Gastrocnemius medialis (tissue), 4 donors: ENCODE measurements at regions of chr3 and their contacts with region 1.

Region 1: DNA sequence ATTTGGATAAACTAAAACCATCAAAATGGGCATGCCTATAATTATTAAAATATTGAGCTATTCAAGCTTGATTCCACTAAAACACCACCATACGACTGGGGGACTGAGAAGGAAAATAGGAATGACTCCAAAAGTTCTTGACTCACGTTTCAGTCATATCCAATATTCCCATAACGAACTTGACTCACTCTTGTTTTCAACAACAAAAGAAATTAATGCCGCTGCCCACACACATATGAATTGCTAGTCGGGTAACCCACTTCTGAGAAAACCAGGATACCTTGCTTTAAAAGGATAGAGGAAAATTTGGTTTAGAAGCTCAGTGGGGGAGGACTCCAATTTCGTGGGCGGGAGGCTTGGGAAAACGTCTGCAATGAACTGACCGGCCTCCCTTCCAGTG is 5.2 kb downstream of the HTR3C start:
- DNase-seq: no peak
- ATAC-seq: no peak
- H3K4me3 ChIP-seq: no peak overlapping the region
- H3K27ac ChIP-seq: no peak overlapping the region
- H3K4me1 ChIP-seq: no peaks in the 10 kb centered on the region
- H3K27me3 ChIP-seq: no peaks in the 10 kb centered on the region
- CTCF ChIP-seq: no peak
- POLR2A ChIP-seq: no peak

Region 2: GRCh38 chr3:183975981-183976662 is 81.9 kb before region 1 on chr3:
- in situ Hi-C with region 1: no loop called
- intact Hi-C with region 1: no loop called
- DNase-seq: no peak
- ATAC-seq: no peak
- H3K4me3 ChIP-seq: no peak overlapping the region
- H3K27ac ChIP-seq: peak overlapping the region; percentile 88 to 94 (median 90)
- H3K4me1 ChIP-seq: peaks cover 44 to 52% of the 10 kb centered on the region in 2 donors
- H3K27me3 ChIP-seq: no peaks in the 10 kb centered on the region
- CTCF ChIP-seq: no peak
- POLR2A ChIP-seq: no peak

Region 3: GRCh38 chr3:184110316-184110725 is 52.3 kb after region 1 on chr3:
- in situ Hi-C with region 1: loop called in 1 of 4 experiments (anchors 10 kb)
- intact Hi-C with region 1: no loop called
- DNase-seq: no peak
- ATAC-seq: no peak
- H3K4me3 ChIP-seq: no peak overlapping the region
- H3K27ac ChIP-seq: no peak overlapping the region
- H3K4me1 ChIP-seq: no peaks in the 10 kb centered on the region
- H3K27me3 ChIP-seq: no peaks in the 10 kb centered on the region
- CTCF ChIP-seq: no peak
- POLR2A ChIP-seq: no peak